CD8-positive, alpha-beta T cell (primary cell): ENCODE measurements at regions of chr3 and their contacts with region 1.

Region 1: DNA sequence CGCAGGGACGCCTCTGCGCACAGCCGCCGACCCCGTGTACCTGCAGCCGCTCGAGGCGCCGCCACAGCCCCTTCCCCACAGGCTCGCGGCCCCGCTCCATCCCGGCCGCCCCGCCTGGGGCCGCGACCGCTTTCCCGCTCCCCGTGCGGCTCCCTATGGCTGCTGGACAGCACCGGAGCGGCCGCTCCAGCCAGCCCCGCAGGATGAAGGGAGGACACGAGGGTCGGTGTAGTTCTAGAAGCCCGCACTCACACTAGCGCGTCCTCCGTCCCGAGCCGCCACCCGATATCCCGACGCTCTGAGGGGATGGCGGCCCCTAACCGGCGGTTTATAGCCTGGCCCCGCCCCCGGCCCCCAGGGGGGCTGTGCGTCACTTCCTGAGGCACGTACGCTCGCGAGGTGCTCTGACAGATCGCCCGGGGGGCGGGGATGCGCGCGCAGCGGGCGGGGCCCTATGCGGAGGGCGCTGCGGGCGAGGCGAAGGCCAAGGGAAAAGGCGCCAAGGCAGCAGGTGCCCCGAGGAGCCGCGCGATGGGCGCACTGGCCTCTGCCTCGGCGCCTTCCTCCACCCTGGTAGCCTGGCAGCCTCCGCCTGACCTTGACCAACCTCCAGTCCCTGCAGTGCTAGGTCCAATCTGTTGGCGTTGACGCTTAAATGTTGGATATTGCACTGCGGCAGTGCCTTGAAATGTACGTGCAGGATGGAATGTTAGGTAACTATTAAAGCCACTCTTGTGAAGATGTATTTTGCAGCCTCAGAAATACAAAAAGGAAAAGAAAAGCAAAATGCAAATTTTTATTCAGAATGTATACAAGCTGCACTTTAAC is at the start of gene TFRC:
- DNase-seq: peak; percentile 86 to 98 (median 95)
- ATAC-seq: peak; percentile 90
- H3K4me3 ChIP-seq: peak within 1 kb of the TSS; percentile 84 to 98
- H3K4me3 Mint-ChIP-seq: peak within 1 kb of the TSS; percentile 97
- H3K27ac ChIP-seq: peak within 1 kb of the TSS; percentile 88 to 99
- H3K27ac Mint-ChIP-seq: peak within 1 kb of the TSS; percentile 94
- H3K4me1 ChIP-seq: peaks cover 33% of the 10 kb centered on the region
- H3K4me1 Mint-ChIP-seq: peaks cover 36% of the 10 kb centered on the region
- H3K27me3 ChIP-seq: no peaks in the 10 kb centered on the region
- H3K27me3 Mint-ChIP-seq: no peaks in the 10 kb centered on the region
- CTCF ChIP-seq: no peak
- total RNA-seq, gene TFRC: 208 to 218 TPM

Region 2: GRCh38 chr3:196179380-196180308 is 97.6 kb after region 1 on chr3:
- CTCF ChIA-PET with region 1: interaction called, 4 read pairs
- POLR2A ChIA-PET with region 1: interaction called, 8 read pairs
- intact Hi-C with region 1: loop called in 1 of 2 experiments (anchors 1 kb)
- DNase-seq: peak; percentile 51 to 97 (median 87)
- ATAC-seq: peak; percentile 92
- H3K4me3 ChIP-seq: peak overlapping the region; percentile 32
- H3K4me3 Mint-ChIP-seq: peak overlapping the region; percentile 74
- H3K27ac ChIP-seq: peak overlapping the region; percentile 53 to 91
- H3K27ac Mint-ChIP-seq: peak overlapping the region; percentile 98
- H3K4me1 ChIP-seq: peaks cover 38% of the 10 kb centered on the region
- H3K4me1 Mint-ChIP-seq: peaks cover 34% of the 10 kb centered on the region
- H3K27me3 ChIP-seq: no peaks in the 10 kb centered on the region
- H3K27me3 Mint-ChIP-seq: no peaks in the 10 kb centered on the region
- CTCF ChIP-seq: peak; percentile 48

Region 3: GRCh38 chr3:196207833-196208607 is 126.0 kb after region 1 on chr3:
- CTCF ChIA-PET with region 1: no interaction called
- POLR2A ChIA-PET with region 1: no interaction called
- intact Hi-C with region 1: loop called in 1 of 2 experiments (anchors 1 kb)
- DNase-seq: peak; percentile 34 to 83 (median 64)
- ATAC-seq: peak; percentile 78
- H3K4me3 ChIP-seq: peak overlapping the region; percentile 57 to 71
- H3K4me3 Mint-ChIP-seq: peak overlapping the region; percentile 85
- H3K27ac ChIP-seq: no peak overlapping the region
- H3K27ac Mint-ChIP-seq: peak overlapping the region; percentile 38
- H3K4me1 ChIP-seq: peaks cover 7% of the 10 kb centered on the region
- H3K4me1 Mint-ChIP-seq: peaks cover 12% of the 10 kb centered on the region
- H3K27me3 ChIP-seq: no peaks in the 10 kb centered on the region
- H3K27me3 Mint-ChIP-seq: no peaks in the 10 kb centered on the region
- CTCF ChIP-seq: no peak

Region 4: DNA sequence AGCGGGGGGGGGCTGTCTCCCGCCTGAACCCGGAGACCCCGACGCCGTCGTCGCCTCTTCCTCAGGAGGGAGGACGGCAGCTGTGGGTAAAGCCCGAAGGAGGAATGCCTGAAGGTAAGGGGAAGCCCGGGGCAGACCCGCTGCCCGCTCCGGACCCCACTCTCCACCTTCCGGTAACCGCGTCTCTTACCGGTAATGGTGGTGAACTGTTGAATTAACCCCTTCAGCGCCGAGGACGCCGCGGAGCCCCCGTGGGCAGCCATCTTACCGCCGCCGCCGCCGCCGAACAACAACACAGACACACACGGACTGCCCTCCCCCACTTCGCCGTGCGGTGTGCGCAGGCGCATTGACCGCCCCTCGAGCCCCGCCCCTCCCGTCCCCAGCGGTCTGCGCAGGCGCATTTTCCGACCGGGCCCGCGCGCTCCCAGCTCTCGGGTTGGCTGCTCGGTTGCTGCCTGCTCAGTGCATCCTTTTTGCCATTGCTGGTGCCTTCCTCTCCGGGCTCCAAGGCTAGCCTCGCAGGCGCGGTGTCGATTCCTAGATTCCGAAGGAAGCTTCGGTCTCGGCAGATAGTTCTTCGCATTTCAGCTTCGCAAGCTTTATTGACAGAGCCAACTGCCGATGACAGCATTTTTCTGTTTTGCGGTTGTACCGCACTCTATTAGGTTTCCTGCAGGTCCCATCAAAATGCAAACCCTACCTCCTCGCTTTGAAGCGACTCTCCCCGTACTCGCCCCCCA is 350.3 kb after region 1 on chr3 and contains the start of gene UBXN7:
- CTCF ChIA-PET with region 1: no interaction called
- POLR2A ChIA-PET with region 1: no interaction called
- intact Hi-C with region 1: loop called in 1 of 2 experiments (anchors 10 kb)
- DNase-seq: peak; percentile 94 to 99 (median 97)
- ATAC-seq: peak; percentile 86
- H3K4me3 ChIP-seq: peak within 1 kb of the TSS; percentile 60 to 77
- H3K4me3 Mint-ChIP-seq: peak within 1 kb of the TSS; percentile 76
- H3K27ac ChIP-seq: peak within 1 kb of the TSS; percentile 80 to 85
- H3K27ac Mint-ChIP-seq: peak within 1 kb of the TSS; percentile 97
- H3K4me1 ChIP-seq: peaks cover 13% of the 10 kb centered on the region
- H3K4me1 Mint-ChIP-seq: peaks cover 29% of the 10 kb centered on the region
- H3K27me3 ChIP-seq: no peaks in the 10 kb centered on the region
- H3K27me3 Mint-ChIP-seq: no peaks in the 10 kb centered on the region
- CTCF ChIP-seq: no peak
- total RNA-seq, gene UBXN7: 72.5 to 80.1 TPM

Region 5: GRCh38 chr3:196739671-196740480 is 657.9 kb after region 1 on chr3 and contains the start of gene PAK2:
- CTCF ChIA-PET with region 1: no interaction called
- POLR2A ChIA-PET with region 1: no interaction called
- intact Hi-C with region 1: loop called (anchors 5 kb)
- DNase-seq: peak; percentile 78 to 95 (median 90)
- ATAC-seq: peak; percentile 84
- H3K4me3 ChIP-seq: peak within 1 kb of the TSS; percentile 69 to 77
- H3K4me3 Mint-ChIP-seq: peak within 1 kb of the TSS; percentile 99
- H3K27ac ChIP-seq: peak within 1 kb of the TSS; percentile 82 to 88
- H3K27ac Mint-ChIP-seq: peak within 1 kb of the TSS; percentile 98
- H3K4me1 ChIP-seq: peaks cover 27% of the 10 kb centered on the region
- H3K4me1 Mint-ChIP-seq: peaks cover 33% of the 10 kb centered on the region
- H3K27me3 ChIP-seq: no peaks in the 10 kb centered on the region
- H3K27me3 Mint-ChIP-seq: no peaks in the 10 kb centered on the region
- CTCF ChIP-seq: no peak
- total RNA-seq, gene PAK2: 29.9 to 30.4 TPM